GM12878 (cell line): ENCODE measurements at regions of chr13 and their contacts with region 1.

Region 1: DNA sequence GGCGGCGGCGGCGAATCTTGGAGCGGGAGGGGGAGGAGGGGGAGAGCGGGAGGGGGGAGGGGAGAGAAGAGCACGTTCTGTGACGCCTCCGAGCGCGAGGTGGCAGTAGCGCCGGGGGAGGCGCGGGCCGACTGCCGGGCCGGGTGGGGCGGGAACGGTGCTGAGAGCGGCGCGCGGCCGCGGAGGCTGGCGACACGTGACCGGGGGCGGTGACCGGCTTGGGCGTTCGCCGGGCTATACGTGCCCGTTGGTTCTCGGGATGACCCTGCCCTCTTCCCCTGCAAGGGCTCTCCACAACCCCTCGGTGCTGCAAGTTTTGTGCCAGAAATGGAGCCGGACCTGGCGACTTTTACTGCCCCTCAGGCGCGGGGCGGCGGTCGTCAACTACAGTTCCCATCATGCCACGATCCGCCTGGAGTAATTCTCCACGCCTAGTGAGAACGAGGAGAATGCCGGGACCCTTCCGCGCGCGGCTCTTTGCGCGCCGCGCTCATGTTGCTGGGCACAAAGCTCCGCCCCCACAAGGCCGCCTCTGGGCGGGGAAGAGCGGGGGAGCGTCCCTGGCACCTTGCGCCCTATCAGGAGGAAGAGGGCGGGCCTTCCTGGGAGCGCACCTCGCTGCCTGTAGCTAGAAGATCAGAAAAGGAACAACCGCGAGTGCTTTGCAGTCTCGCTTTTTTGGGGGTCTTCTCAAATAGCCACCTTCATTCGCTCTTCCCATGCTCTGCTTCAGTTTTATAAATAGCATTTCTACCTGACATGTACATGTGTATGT is at the start of gene KPNA3:
- DNase-seq: peak; percentile 85
- ATAC-seq: peak; percentile 94
- H3K4me3 ChIP-seq: peak within 1 kb of the TSS; percentile 91
- H3K27ac ChIP-seq: peak within 1 kb of the TSS; percentile 83
- H3K4me1 ChIP-seq: peaks cover 6% of the 10 kb centered on the region
- H3K27me3 ChIP-seq: no peaks in the 10 kb centered on the region
- CTCF ChIP-seq: peak in 1 of 3 experiments; percentile 38; a peak in 2 of 6 replicates
- EP300 ChIP-seq: no peak
- POLR2A ChIP-seq: peak; percentile 52
- RAD21 ChIP-seq: no peak
- polyA plus RNA-seq, gene KPNA3: 23.3 to 27.5 TPM

Region 2: DNA sequence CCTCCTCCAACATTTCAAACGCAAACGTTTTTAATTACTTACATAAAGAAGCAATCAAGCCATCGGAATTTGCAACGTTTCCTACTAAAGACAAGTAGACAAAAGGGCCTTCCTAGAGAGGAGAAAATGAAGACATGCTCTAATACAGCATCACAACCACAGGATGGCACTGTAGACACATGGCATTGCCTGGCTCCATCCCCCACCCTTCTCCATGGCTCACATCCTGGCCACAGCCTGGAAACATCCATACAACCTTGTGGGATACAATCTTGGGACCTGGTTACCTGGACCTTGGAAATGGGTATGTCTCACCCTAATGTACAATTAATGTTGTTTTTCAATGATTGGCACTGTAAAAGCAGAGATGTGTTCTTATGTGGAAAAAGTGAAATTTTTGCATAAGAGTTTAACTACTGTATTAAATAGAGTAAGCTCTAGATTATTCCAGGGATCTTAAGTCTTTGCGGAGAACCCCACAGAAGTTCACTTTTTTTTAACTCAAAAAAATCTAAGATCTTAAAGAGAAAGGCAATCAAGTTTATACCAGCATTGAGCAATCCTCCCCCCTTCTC is 122.9 kb before region 1 on chr13:
- CTCF ChIA-PET with region 1: interaction called, 53 read pairs
- POLR2A ChIA-PET with region 1: no interaction called
- RAD21 ChIA-PET with region 1: interaction called, 13 read pairs
- SMC1A ChIA-PET with region 1: interaction called, 45 read pairs
- in situ Hi-C with region 1: no loop called
- intact Hi-C with region 1: loop called (anchors 2 kb)
- DNase-seq: no peak
- ATAC-seq: peak; percentile 99
- H3K4me3 ChIP-seq: no peak overlapping the region
- H3K27ac ChIP-seq: no peak overlapping the region
- H3K4me1 ChIP-seq: no peaks in the 10 kb centered on the region
- H3K27me3 ChIP-seq: no peaks in the 10 kb centered on the region
- CTCF ChIP-seq: peak; percentile 76 to 82 (median 79)
- EP300 ChIP-seq: no peak
- POLR2A ChIP-seq: no peak
- RAD21 ChIP-seq: peak; percentile 82

Region 3: DNA sequence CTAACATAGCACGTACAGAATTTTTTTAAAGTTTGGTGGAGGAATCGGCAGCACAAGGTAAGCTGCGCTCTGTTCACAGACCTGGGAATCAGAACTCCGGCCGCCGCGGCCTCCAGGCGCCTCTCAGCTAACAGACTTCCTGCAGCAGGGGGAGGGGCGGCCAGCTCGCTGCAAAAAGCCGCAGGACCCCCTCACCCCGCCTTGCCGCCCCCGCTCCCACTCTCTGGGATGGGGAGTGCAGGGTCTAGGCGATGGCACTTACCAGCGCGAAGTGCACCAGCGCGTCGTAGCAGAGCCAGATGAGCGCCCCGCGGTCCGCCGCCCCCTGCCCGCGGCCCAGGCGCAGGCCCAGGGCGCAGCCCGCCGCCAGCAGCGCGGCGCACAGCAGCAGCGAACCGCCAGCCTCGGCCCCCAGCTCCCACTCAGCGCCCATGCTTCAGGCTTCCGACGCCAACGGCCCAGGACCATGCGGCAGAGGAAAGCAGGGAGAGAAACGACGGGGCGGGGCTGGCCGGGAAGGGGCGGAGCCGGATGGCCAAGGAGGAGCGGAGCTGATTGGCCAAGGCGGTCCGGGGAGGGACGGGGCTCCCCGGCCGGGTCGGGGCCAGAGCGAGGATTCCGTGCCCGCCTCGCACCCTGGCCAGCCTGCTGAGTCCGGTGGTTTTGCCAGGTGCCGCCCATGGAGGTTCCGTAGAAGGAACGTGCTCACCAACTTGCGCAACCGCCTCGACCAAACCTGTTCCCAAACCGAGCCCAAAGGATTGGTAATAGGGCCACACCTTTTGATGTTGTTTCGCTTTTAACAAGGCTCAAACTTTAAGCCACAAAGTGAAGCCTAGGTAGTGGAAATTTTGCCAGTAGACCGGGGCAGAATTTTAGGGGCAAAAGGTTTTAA is 101.5 kb before region 1 on chr13 and contains the start of gene EBPL:
- CTCF ChIA-PET with region 1: interaction called, 15 read pairs
- POLR2A ChIA-PET with region 1: interaction called, 6 read pairs
- RAD21 ChIA-PET with region 1: interaction called, 6 read pairs
- SMC1A ChIA-PET with region 1: interaction called, 8 read pairs
- in situ Hi-C with region 1: no loop called
- intact Hi-C with region 1: loop called (anchors 2 kb)
- DNase-seq: peak; percentile 47
- ATAC-seq: peak; percentile 98
- H3K4me3 ChIP-seq: peak within 1 kb of the TSS; percentile 81
- H3K27ac ChIP-seq: peak within 1 kb of the TSS; percentile 65
- H3K4me1 ChIP-seq: no peaks in the 10 kb centered on the region; the same call in 1 of the 2 replicates
- H3K27me3 ChIP-seq: no peaks in the 10 kb centered on the region
- CTCF ChIP-seq: no peak
- EP300 ChIP-seq: no peak
- POLR2A ChIP-seq: peak; percentile 86
- RAD21 ChIP-seq: no peak
- polyA plus RNA-seq, gene EBPL: 6.2 to 16.7 TPM

Region 4: GRCh38 chr13:49806126-49806536 is 13.4 kb after region 1 on chr13:
- CTCF ChIA-PET with region 1: interaction called, 10 read pairs
- POLR2A ChIA-PET with region 1: no interaction called
- RAD21 ChIA-PET with region 1: interaction called, 3 read pairs
- SMC1A ChIA-PET with region 1: interaction called, 5 read pairs
- in situ Hi-C with region 1: no loop called
- intact Hi-C with region 1: no loop called
- DNase-seq: no peak
- ATAC-seq: no peak
- H3K4me3 ChIP-seq: no peak overlapping the region
- H3K27ac ChIP-seq: no peak overlapping the region
- H3K4me1 ChIP-seq: no peaks in the 10 kb centered on the region
- H3K27me3 ChIP-seq: no peaks in the 10 kb centered on the region; a peak in 1 of 4 replicates
- CTCF ChIP-seq: no peak
- EP300 ChIP-seq: no peak
- POLR2A ChIP-seq: no peak
- RAD21 ChIP-seq: no peak

Region 5: GRCh38 chr13:49914947-49915346 is 122.2 kb after region 1 on chr13:
- CTCF ChIA-PET with region 1: no interaction called
- POLR2A ChIA-PET with region 1: no interaction called
- RAD21 ChIA-PET with region 1: no interaction called
- SMC1A ChIA-PET with region 1: no interaction called
- in situ Hi-C with region 1: no loop called
- intact Hi-C with region 1: no loop called
- DNase-seq: no peak
- ATAC-seq: no peak
- H3K4me3 ChIP-seq: no peak overlapping the region
- H3K27ac ChIP-seq: no peak overlapping the region
- H3K4me1 ChIP-seq: no peaks in the 10 kb centered on the region
- H3K27me3 ChIP-seq: no peaks in the 10 kb centered on the region
- CTCF ChIP-seq: no peak
- EP300 ChIP-seq: no peak
- POLR2A ChIP-seq: no peak
- RAD21 ChIP-seq: no peak

Region 6: DNA sequence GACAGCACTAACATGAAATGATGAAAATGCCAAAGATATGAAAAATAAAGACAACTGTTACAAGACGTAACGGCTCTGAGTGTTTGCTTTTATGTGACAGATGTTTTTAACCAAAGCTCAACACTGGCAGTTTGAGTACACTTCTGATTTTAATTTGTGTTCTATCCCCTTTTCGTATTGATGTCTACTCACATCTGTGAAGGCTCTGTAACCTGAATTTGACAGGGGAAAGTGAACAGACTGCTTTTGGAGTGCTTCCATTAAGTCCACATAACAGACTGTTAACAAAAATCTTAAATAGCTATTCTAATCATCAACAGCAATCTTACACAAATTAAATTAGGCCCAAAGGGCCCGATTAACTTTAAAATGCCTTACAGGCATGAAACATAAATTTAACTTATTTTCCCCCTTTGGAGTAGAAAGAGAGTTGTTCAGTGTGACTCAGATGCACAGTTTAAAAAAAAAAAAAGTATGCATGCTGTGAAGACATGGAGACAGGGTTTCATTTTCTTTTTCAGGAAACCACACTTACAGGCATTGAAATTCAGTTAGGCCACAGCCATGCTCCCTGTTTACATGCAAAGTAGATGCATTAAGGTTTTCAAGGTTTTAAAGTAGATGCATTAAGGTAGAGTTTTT is 1100.6 kb after region 1 on chr13:
- CTCF ChIA-PET with region 1: no interaction called
- POLR2A ChIA-PET with region 1: no interaction called
- RAD21 ChIA-PET with region 1: no interaction called
- SMC1A ChIA-PET with region 1: no interaction called
- in situ Hi-C with region 1: no loop called
- intact Hi-C with region 1: loop called (anchors 5 kb)
- DNase-seq: no peak
- ATAC-seq: peak; percentile 88
- H3K4me3 ChIP-seq: peak overlapping the region; percentile 50; the same call in 1 of the 2 replicates
- H3K27ac ChIP-seq: peak overlapping the region; percentile 93
- H3K4me1 ChIP-seq: peaks cover 34% of the 10 kb centered on the region
- H3K27me3 ChIP-seq: no peaks in the 10 kb centered on the region
- CTCF ChIP-seq: no peak
- EP300 ChIP-seq: peak; percentile 62 to 78; a peak in 3 of 4 replicates
- POLR2A ChIP-seq: no peak
- RAD21 ChIP-seq: no peak